MCF 10A (cell line): ENCODE measurements at regions of chr2 and their contacts with region 1.

Region 1: DNA sequence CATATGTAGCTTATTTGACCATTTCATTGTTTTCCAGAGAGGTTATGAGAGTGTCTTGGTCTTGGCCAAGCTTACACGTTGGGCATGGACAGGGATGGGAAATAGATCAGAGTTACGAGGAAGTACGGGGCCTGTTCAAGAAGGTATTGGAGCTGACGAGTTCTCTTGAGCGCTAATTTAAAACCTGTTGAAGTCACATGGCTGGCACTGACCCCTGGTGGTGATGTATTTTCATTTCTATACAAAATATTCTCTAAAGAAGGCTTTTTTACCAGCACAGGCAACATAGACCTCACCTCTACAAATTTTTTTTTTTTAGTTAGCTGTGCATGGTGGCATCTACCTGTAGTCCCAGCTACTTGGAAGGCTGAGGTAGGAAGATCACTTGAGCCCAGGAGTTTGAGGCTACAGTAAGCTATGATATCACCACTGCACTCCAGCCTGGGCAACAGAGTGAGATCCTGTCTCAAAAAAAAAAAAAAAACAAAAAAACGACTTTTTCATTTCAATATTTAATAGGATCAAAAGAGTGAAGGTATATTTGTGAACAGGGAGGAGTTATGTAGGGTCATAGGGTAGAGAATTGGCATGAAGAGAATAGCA is 19.6 kb downstream of the UGP2 start:
- DNase-seq: peak; percentile 67
- H3K4me3 Mint-ChIP-seq: no peak overlapping the region
- H3K27ac Mint-ChIP-seq: peak overlapping the region; percentile 69
- H3K4me1 Mint-ChIP-seq: peaks cover 22% of the 10 kb centered on the region
- H3K27me3 Mint-ChIP-seq: no peaks in the 10 kb centered on the region
- CTCF ChIP-seq: peak; percentile 60

Region 2: GRCh38 chr2:63692002-63692606 is 169.2 kb before region 1 on chr2:
- CTCF ChIA-PET with region 1: interaction called, 36 read pairs
- POLR2A ChIA-PET with region 1: interaction called, 12 read pairs
- intact Hi-C with region 1: loop called (anchors 1 kb)
- DNase-seq: peak; percentile 48
- H3K4me3 Mint-ChIP-seq: no peak overlapping the region
- H3K27ac Mint-ChIP-seq: no peak overlapping the region
- H3K4me1 Mint-ChIP-seq: peaks cover 5% of the 10 kb centered on the region
- H3K27me3 Mint-ChIP-seq: no peaks in the 10 kb centered on the region
- CTCF ChIP-seq: peak; percentile 63

Region 3: GRCh38 chr2:63736354-63736753 is 125.0 kb before region 1 on chr2:
- CTCF ChIA-PET with region 1: interaction called, 11 read pairs
- POLR2A ChIA-PET with region 1: interaction called, 16 read pairs
- intact Hi-C with region 1: no loop called
- DNase-seq: no peak
- H3K4me3 Mint-ChIP-seq: no peak overlapping the region
- H3K27ac Mint-ChIP-seq: peak overlapping the region; percentile 37
- H3K4me1 Mint-ChIP-seq: peaks cover 50% of the 10 kb centered on the region
- H3K27me3 Mint-ChIP-seq: no peaks in the 10 kb centered on the region
- CTCF ChIP-seq: no peak

Region 4: DNA sequence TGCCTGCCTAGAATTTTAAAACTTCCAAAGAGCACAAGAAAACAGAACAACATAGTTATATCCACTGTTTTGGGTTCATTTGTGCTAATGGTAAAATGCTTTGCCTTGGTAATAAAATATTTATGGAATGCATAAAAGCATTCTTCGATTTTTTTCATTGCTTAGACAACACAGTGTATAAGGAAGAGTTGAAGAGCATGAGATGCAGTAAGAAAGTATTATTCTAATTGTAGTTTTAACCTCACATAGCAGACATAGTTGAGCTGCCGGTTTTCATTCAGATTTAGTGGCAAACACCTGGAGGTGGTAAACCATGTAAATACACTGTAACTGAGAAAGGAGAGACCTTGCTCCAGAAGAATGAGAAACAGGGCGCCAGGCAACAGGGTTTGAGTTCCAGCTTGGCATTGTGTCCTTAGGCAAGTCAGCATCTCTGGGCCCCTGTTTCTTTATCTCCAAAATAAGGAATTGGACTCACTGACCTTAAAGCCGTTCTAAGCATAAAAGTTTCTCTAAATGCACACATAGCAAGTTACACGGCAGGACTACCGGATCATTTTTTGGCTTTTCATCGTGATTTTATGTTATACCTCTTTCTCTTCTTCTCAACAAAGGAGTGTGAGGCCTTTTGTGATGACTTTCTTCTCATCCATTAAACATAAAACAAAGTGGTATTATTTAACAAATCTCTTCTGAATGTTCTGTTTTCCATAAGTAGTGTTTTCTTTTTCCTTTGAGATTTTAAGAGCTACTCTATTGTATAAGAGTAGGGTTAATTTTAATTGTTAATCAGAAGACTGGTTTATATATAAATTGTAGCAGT is 11.7 kb before region 1 on chr2:
- CTCF ChIA-PET with region 1: interaction called, 20 read pairs
- POLR2A ChIA-PET with region 1: interaction called, 248 read pairs
- intact Hi-C with region 1: no loop called
- DNase-seq: no peak
- H3K4me3 Mint-ChIP-seq: no peak overlapping the region
- H3K27ac Mint-ChIP-seq: peak overlapping the region; percentile 91
- H3K4me1 Mint-ChIP-seq: peaks cover 55% of the 10 kb centered on the region
- H3K27me3 Mint-ChIP-seq: no peaks in the 10 kb centered on the region
- CTCF ChIP-seq: no peak

Region 5: GRCh38 chr2:63875131-63875527 is 13.8 kb after region 1 on chr2:
- CTCF ChIA-PET with region 1: interaction called, 13 read pairs
- POLR2A ChIA-PET with region 1: interaction called, 48 read pairs
- intact Hi-C with region 1: no loop called
- DNase-seq: peak; percentile 35
- H3K4me3 Mint-ChIP-seq: peak overlapping the region; percentile 57
- H3K27ac Mint-ChIP-seq: peak overlapping the region; percentile 98
- H3K4me1 Mint-ChIP-seq: peaks cover 52% of the 10 kb centered on the region
- H3K27me3 Mint-ChIP-seq: no peaks in the 10 kb centered on the region
- CTCF ChIP-seq: no peak

Region 6: DNA sequence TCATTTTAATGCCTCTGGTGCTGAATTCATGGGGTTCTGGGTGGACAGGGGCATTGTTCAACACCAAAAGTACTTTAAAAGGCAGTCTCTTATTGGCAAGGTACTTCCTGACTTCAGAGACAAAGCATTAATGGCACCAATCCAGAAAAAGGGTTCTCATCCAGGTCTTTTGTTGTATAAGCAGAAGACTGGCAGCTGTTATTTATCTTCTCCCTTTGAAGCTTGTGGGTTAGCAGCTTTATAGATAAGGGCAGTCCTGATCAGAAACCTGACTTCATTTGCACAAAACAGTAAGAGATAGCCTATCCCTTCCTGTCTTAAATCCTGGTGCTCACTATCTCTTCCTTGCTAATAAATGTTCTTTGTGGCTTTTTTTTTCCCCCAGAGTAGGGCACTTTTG is 89.1 kb after region 1 on chr2:
- CTCF ChIA-PET with region 1: no interaction called
- POLR2A ChIA-PET with region 1: no interaction called
- intact Hi-C with region 1: no loop called
- DNase-seq: no peak
- H3K4me3 Mint-ChIP-seq: no peak overlapping the region
- H3K27ac Mint-ChIP-seq: no peak overlapping the region
- H3K4me1 Mint-ChIP-seq: no peaks in the 10 kb centered on the region
- H3K27me3 Mint-ChIP-seq: no peaks in the 10 kb centered on the region
- CTCF ChIP-seq: no peak